ENCODE measurements at regions of chr1 and their contacts with region 1.

Region 1: GRCh38 chr1:27979151-27979858 is 19.5 kb downstream of the XKR8 start:
- DNase-seq: peak in 2 of 9 experiments; percentile 61 to 74
- ATAC-seq: peak; percentile 70
- H3K4me3 ChIP-seq: no peak overlapping the region
- H3K4me3 Mint-ChIP-seq: no peak overlapping the region
- H3K27ac ChIP-seq: no peak overlapping the region
- H3K27ac Mint-ChIP-seq: no peak overlapping the region
- H3K4me1 ChIP-seq: no peaks in the 10 kb centered on the region
- H3K4me1 Mint-ChIP-seq: no peaks in the 10 kb centered on the region
- H3K27me3 ChIP-seq: no peaks in the 10 kb centered on the region
- H3K27me3 Mint-ChIP-seq: no peaks in the 10 kb centered on the region
- CTCF ChIP-seq: peak; percentile 65

Region 2: GRCh38 chr1:27849951-27850350 is 129.4 kb before region 1 on chr1:
- CTCF ChIA-PET with region 1: interaction called, 14 read pairs
- POLR2A ChIA-PET with region 1: no interaction called
- intact Hi-C with region 1: no loop called
- DNase-seq: no peak
- ATAC-seq: no peak
- H3K4me3 ChIP-seq: no peak overlapping the region
- H3K4me3 Mint-ChIP-seq: no peak overlapping the region
- H3K27ac ChIP-seq: no peak overlapping the region
- H3K27ac Mint-ChIP-seq: no peak overlapping the region
- H3K4me1 ChIP-seq: no peaks in the 10 kb centered on the region
- H3K4me1 Mint-ChIP-seq: no peaks in the 10 kb centered on the region
- H3K27me3 ChIP-seq: no peaks in the 10 kb centered on the region
- H3K27me3 Mint-ChIP-seq: no peaks in the 10 kb centered on the region
- CTCF ChIP-seq: no peak

Region 3: GRCh38 chr1:27858072-27858958 is 121.0 kb before region 1 on chr1:
- CTCF ChIA-PET with region 1: interaction called, 65 read pairs
- POLR2A ChIA-PET with region 1: no interaction called
- intact Hi-C with region 1: loop called (anchors 1 to 2 kb)
- DNase-seq: peak; percentile 71 to 91 (median 85)
- ATAC-seq: peak; percentile 100
- H3K4me3 ChIP-seq: no peak overlapping the region
- H3K4me3 Mint-ChIP-seq: no peak overlapping the region
- H3K27ac ChIP-seq: no peak overlapping the region
- H3K27ac Mint-ChIP-seq: no peak overlapping the region
- H3K4me1 ChIP-seq: peaks cover 11% of the 10 kb centered on the region
- H3K4me1 Mint-ChIP-seq: peaks cover 17% of the 10 kb centered on the region
- H3K27me3 ChIP-seq: no peaks in the 10 kb centered on the region
- H3K27me3 Mint-ChIP-seq: no peaks in the 10 kb centered on the region
- CTCF ChIP-seq: peak; percentile 100

Region 4: DNA sequence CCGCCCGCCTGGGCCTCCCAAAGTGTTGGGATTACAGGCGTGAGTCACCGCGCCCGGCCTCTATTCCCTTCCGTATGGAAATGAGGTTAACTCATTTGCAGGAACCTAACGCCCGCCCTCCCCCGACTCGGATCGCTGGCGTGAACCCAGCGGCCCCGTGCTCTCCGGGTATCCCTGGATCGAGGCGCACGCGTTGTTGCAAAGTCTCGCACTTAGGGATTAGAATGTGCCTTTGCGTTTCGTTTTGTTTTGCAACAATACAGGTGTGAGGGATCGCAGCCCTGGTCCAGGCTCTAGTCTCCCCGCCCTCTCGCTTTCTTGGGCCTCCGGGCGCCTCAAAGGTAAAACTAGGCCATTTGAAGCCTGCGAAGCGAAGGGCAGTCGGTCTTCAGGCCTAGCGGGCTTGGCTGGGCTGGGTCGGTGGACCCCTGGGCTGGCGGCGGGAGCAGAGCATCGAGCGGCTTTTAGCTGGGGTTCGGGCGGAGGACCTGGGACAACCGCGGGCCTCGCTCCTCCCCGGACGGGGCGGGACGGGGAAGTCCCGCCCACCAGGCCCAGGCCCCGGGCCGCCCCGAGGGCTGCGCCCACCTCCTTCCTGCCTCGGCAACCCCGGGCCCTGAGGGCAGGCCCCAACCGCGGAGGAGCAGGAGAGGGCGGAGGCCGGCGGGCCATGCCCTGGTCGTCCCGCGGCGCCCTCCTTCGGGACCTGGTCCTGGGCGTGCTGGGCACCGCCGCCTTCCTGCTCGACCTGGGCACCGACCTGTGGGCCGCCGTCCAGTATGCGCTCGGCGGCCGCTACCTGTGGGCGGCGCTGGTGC is 19.7 kb before region 1 on chr1 and contains the start of gene XKR8:
- CTCF ChIA-PET with region 1: interaction called, 12 read pairs
- POLR2A ChIA-PET with region 1: interaction called, 3 read pairs
- intact Hi-C with region 1: no loop called
- DNase-seq: peak; percentile 71 to 92 (median 84)
- ATAC-seq: peak; percentile 99
- H3K4me3 ChIP-seq: peak within 1 kb of the TSS; percentile 69 to 81
- H3K4me3 Mint-ChIP-seq: peak within 1 kb of the TSS; percentile 85
- H3K27ac ChIP-seq: peak within 1 kb of the TSS; percentile 65 to 76
- H3K27ac Mint-ChIP-seq: peak within 1 kb of the TSS; percentile 90
- H3K4me1 ChIP-seq: peaks cover 16% of the 10 kb centered on the region
- H3K4me1 Mint-ChIP-seq: peaks cover 32% of the 10 kb centered on the region
- H3K27me3 ChIP-seq: no peaks in the 10 kb centered on the region
- H3K27me3 Mint-ChIP-seq: no peaks in the 10 kb centered on the region
- CTCF ChIP-seq: no peak
- total RNA-seq, gene XKR8: 6.1 to 7.3 TPM

Region 5: DNA sequence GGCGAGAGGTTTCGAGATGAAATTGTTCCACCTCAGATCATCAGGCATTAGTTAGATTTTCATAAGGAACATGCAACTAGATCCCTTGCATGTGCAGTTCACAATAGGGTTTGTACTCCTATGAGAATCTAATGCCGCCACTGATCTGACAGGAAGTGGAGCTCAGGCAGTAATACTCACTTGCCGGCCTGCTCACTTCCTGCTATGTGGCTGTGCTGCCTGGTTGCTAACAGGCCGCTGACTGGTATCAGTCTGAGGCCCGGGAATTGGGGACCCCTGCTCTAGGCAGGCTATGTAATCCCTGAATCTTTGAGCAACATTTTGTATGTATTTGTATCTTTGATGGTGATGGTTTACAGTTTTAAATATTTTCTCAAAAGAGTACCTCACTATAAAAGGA is 13.0 kb after region 1 on chr1:
- CTCF ChIA-PET with region 1: interaction called, 16 read pairs
- POLR2A ChIA-PET with region 1: no interaction called
- intact Hi-C with region 1: no loop called
- DNase-seq: peak; percentile 16 to 77 (median 61)
- ATAC-seq: peak; percentile 97
- H3K4me3 ChIP-seq: no peak overlapping the region
- H3K4me3 Mint-ChIP-seq: peak overlapping the region; percentile 26
- H3K27ac ChIP-seq: peak overlapping the region; percentile 18 to 77
- H3K27ac Mint-ChIP-seq: peak overlapping the region; percentile 79
- H3K4me1 ChIP-seq: peaks cover 8% of the 10 kb centered on the region
- H3K4me1 Mint-ChIP-seq: peaks cover 23% of the 10 kb centered on the region
- H3K27me3 ChIP-seq: no peaks in the 10 kb centered on the region
- H3K27me3 Mint-ChIP-seq: no peaks in the 10 kb centered on the region
- CTCF ChIP-seq: no peak

Region 6: DNA sequence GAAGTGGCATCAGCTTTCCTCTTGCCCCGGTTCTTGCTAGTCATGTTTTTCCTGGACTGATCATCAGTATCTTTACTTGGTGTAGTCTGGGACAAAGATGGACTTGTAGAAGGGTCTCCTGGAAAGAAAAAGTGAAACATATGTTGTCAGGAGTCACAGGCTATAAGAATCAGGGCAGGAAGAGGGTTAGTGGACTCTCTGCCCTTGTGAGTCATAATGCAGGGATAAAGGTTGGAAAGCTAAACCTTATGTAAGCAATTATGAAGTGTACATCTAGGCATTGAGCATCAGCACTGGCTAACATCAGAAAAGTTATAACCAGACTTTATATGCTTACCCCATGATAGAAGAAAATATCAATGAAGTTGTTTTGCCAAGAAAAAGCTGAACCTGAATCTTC is 31.7 kb after region 1 on chr1:
- CTCF ChIA-PET with region 1: no interaction called
- POLR2A ChIA-PET with region 1: no interaction called
- intact Hi-C with region 1: no loop called
- DNase-seq: no peak
- ATAC-seq: no peak
- H3K4me3 ChIP-seq: no peak overlapping the region
- H3K4me3 Mint-ChIP-seq: no peak overlapping the region
- H3K27ac ChIP-seq: no peak overlapping the region
- H3K27ac Mint-ChIP-seq: no peak overlapping the region
- H3K4me1 ChIP-seq: no peaks in the 10 kb centered on the region
- H3K4me1 Mint-ChIP-seq: no peaks in the 10 kb centered on the region
- H3K27me3 ChIP-seq: no peaks in the 10 kb centered on the region
- H3K27me3 Mint-ChIP-seq: no peaks in the 10 kb centered on the region
- CTCF ChIP-seq: no peak